Activated T-helper 1 cell treated with anti-CD3 and anti-CD28 coated beads, Interleukin-12 subunit alpha, Interleukin-12 subunit beta, Interleukin-2, Interleukin-4 antibody, amounts not matched to agents 30 ng/mL and 10 ng/mL and 1 ng/mL, durations not matched to agents 14 hours and 24 hours and 36 hours (primary cell): ENCODE measurements at regions of chr12 and their contacts with region 1.

Region 1: GRCh38 chr12:6873094-6874014 is at the start of gene SPSB2:
- DNase-seq: peak; percentile 99
- H3K4me3 Mint-ChIP-seq: peak within 1 kb of the TSS; percentile 96
- H3K27ac Mint-ChIP-seq: peak within 1 kb of the TSS; percentile 86
- H3K4me1 Mint-ChIP-seq: peaks cover 56% of the 10 kb centered on the region
- H3K27me3 Mint-ChIP-seq: no peaks in the 10 kb centered on the region
- total RNA-seq, gene SPSB2: 3.4 and 4.7 TPM in 2 replicates

Region 2: GRCh38 chr12:6834873-6835272 is 38.5 kb before region 1 on chr12:
- intact Hi-C with region 1: loop called (anchors 2 kb)
- DNase-seq: no peak
- H3K4me3 Mint-ChIP-seq: no peak overlapping the region
- H3K27ac Mint-ChIP-seq: no peak overlapping the region
- H3K4me1 Mint-ChIP-seq: peaks cover 14% of the 10 kb centered on the region
- H3K27me3 Mint-ChIP-seq: peaks cover 17% of the 10 kb centered on the region

Region 3: DNA sequence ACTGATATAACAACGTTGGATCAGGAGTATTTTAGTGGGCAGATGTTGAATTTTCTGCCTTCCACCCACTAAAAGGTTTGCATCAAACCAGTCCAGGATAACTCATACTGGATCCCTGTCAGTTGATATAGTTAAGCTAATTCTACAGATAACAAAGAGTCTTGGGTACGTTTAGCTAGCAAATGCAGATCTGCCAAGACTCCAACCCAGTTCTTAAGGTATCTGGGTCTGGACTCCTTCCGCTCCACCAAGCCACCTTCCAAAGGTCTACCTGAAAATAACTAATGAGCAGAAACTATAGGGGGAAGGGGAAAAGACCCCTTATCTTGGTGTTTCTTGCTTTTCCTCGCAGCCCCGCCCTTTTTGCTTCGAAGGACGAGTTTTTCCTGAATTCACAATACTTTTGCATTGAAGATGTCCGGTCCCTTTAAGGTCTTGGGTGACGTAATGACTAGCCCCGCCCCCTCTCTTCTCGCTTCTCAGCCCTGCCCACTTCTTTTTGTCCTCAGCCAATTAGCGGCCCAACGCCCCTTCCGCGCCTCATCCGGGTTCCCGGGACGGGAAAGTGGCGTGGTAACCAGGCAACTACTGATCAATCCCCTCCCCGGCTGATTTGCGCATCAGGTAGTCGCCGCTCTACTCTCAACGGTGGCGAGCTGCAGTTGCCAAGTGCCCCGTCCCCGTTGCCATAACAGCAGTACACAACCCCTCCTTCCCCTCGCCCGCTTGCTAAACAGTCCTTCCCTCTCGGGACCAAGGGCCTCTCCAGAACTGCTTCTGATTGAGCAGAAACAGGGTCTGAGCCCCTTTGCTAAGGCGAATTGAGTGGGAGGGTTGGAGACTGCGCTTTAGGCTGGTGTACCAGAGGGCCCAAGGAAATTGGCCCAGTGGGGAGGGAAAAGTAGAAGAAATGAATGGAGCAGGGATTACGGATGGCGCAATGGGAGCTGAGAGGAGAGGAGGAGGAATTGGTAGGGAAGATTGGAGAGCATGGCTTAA is 31.2 kb after region 1 on chr12 and contains the start of gene LRRC23:
- intact Hi-C with region 1: loop called (anchors 1 kb)
- DNase-seq: peak; percentile 97
- H3K4me3 Mint-ChIP-seq: no peak within 1 kb of the TSS
- H3K27ac Mint-ChIP-seq: no peak within 1 kb of the TSS
- H3K4me1 Mint-ChIP-seq: peaks cover 8% of the 10 kb centered on the region
- H3K27me3 Mint-ChIP-seq: no peaks in the 10 kb centered on the region
- total RNA-seq, gene LRRC23: 5.3 and 5.6 TPM in 2 replicates

Region 4: GRCh38 chr12:6937481-6938297 is 64.3 kb after region 1 on chr12:
- intact Hi-C with region 1: loop called (anchors 1 kb)
- DNase-seq: peak; percentile 91
- H3K4me3 Mint-ChIP-seq: peak overlapping the region; percentile 88
- H3K27ac Mint-ChIP-seq: peak overlapping the region; percentile 98
- H3K4me1 Mint-ChIP-seq: peaks cover 59% of the 10 kb centered on the region
- H3K27me3 Mint-ChIP-seq: no peaks in the 10 kb centered on the region

Region 5: DNA sequence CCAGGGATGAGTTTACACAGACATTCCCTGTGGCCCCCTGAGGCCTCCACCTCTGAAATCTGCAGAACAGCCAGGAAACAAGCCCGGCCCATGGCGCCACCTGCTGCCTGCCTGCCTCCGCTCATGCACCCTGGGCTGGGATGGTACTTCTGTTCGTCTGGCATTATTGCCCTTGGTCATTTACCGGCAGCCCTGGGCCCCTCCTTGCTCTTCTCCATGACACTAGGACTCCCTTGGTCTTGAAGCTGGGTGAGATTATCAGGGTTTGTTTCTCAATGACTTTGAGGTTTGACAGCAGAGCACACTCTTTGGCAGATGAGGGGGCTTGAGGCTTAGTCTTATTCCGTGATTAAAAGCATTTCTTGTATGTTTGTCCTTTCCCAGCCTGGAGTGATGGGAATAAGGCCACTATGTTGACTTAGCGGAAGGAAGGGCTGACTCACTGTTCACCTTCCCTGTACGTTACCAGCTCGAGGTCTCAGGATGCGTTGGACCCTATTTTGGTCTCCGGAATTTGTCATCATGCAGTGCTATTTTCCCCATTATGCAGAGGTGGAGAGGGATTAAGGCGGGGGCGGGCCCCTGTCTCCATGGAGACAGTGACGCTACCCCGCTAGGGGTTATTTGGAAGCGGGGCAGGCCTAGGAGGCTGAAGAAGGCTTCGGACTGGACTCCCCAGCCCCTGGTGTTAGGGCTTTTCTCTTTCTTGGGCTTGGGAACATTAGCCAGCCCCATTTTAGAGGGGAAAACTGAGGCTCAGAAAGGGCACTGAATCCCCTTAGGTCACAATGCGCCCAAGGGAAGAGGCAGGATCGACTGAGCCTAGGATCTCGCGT is 315.4 kb after region 1 on chr12:
- intact Hi-C with region 1: loop called (anchors 1 kb)
- DNase-seq: peak; percentile 49
- H3K4me3 Mint-ChIP-seq: peak overlapping the region; percentile 93
- H3K27ac Mint-ChIP-seq: peak overlapping the region; percentile 98
- H3K4me1 Mint-ChIP-seq: peaks cover 31% of the 10 kb centered on the region
- H3K27me3 Mint-ChIP-seq: peaks cover 4% of the 10 kb centered on the region